ENCODE measurements at regions of chr9 and their contacts with region 1.

Region 1: DNA sequence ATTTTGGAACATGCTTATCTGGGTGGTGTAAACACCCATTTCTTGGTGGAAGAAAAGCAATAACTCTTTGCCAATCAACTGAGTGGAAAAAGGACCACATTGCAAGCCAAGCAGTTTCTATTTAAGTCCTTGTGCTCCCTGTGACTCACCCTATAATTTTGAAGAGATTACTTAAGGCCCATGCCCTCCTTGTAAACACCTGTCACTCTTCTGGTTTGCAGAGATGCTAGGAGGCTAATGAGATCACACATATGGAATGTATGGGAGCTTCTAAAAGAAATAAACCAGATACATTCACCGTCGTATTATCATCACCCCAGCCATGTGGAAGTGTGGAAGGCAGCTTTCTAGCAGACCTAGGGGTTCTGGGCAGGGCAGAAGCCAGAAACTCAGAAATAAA is 337.1 kb downstream of the GADD45G start:
- DNase-seq: no peak
- H3K4me3 ChIP-seq: no peak overlapping the region
- H3K27ac ChIP-seq: peak overlapping the region; percentile 29 to 44
- H3K4me1 ChIP-seq: peaks cover 0 to 26% (median 16%) of the 10 kb centered on the region in 4 donors
- H3K27me3 ChIP-seq: no peaks in the 10 kb centered on the region
- CTCF ChIP-seq: no peak

Region 2: DNA sequence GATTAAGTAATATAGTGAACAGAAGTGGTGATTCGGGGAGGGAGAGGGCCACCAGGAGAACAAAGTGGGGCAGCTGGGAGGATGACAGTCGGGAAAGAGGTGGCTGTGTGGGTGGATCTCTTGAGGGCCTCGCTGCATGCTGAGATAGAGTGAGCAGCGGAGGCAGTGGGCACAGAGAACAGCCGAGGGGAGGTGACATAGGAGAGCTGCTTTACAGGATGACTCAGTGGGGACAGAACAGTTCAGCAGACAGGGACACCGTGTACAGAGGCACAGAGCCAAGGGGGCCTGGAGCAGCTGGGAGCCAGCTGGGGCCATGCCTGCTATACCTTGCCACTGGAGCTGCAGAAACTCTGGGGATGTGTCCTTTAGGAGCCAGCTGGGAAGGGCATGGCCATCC is 63.2 kb before region 1 on chr9:
- intact Hi-C with region 1: no loop called
- DNase-seq: peak; percentile 66 to 91
- H3K4me3 ChIP-seq: no peak overlapping the region
- H3K27ac ChIP-seq: peak overlapping the region; percentile 44 to 68
- H3K4me1 ChIP-seq: peaks cover 0 to 56% (median 48%) of the 10 kb centered on the region in 4 donors
- H3K27me3 ChIP-seq: no peaks in the 10 kb centered on the region
- CTCF ChIP-seq: no peak

Region 3: DNA sequence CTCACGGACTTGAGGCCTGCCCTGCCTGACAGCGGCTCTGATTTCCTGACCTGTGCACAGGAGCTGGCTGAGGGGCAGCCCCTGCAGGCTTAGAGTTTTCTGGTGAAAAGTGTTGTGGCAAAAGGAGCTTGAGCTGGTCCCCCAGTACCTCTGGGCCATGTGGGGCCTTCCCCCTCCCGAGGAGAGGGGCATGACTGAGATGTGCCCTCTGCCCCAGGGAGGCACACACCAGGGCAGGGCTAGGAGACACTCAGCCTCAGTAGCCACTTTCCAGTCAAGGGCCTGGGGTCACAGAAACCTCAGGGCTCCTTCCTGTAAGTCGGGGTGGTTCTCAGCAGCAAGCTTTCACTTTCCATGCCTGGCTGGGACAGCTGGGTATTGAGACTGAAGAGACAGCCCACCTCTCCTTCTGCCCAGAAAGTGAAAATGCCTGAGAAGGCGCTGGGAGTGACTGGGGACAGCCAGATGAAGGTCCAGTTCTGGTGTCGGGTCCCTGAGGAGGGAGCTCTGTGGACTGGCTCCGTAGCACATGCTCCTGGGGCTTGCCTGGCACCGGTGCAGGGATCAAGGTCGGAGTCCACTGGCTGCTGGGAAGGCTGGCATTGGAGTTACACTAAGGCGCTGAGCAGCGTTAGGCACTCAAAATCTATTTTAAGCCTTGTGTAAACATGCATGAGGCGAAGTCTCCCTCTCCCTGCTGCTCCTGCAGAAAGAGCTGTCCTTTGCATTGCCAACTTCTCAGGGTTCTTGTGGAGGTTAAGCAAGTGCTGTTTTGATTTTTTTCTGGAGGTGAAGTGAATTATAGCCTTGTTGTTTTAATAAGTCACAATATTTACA is 57.9 kb after region 1 on chr9:
- intact Hi-C with region 1: loop called (anchors 5 kb)
- DNase-seq: peak; percentile 75 to 96
- H3K4me3 ChIP-seq: peak overlapping the region; percentile 15 to 43
- H3K27ac ChIP-seq: peak overlapping the region; percentile 78 to 83
- H3K4me1 ChIP-seq: peaks cover 3 to 65% (median 50%) of the 10 kb centered on the region in 4 donors
- H3K27me3 ChIP-seq: no peaks in the 10 kb centered on the region
- CTCF ChIP-seq: no peak